B cell (primary cell): ENCODE measurements at regions of chr19 and their contacts with region 1.

Region 1: DNA sequence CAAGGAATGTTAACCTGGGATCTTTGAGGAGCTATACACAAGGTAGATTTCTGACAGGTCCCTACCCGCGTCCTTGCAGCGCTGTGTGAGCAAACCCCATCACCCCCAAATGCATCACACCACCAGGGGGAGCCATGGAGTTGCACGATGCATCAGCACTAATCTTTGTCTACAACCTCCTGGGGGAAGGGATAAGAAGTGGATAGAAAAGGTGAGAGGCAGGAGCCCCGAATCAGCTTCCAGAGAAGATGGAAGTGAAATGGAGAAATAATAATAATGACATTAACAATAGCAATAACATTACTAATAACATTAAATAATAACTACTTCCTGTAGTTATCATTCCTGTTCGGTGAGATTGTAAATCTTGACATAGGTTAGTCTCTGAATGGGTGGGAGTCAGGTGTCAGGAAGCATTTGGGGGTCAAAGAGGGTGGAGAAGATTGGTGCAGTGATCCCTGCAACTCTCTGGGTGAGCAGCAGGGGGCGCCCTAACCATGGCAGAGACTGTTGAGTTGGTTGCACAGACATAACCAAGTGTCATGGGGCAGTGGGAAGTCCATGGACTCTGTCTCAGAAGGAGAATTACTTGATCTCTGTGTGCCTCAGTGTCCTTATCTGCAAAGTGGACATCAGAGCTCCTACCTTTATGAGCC is 16.5 kb downstream of the SIGLEC7 start:
- DNase-seq: peak; percentile 52
- ATAC-seq: no peak
- H3K4me3 ChIP-seq: no peak overlapping the region
- H3K4me3 Mint-ChIP-seq: no peak overlapping the region
- H3K27ac ChIP-seq: no peak overlapping the region
- H3K27ac Mint-ChIP-seq: no peak overlapping the region
- H3K4me1 ChIP-seq: no peaks in the 10 kb centered on the region
- H3K4me1 Mint-ChIP-seq: no peaks in the 10 kb centered on the region
- H3K27me3 ChIP-seq: peaks cover 0 to 27% (median 4%) of the 10 kb centered on the region in 4 experiments
- H3K27me3 Mint-ChIP-seq: peaks cover 39% of the 10 kb centered on the region
- CTCF ChIP-seq: peak; percentile 73

Region 2: GRCh38 chr19:51064534-51065220 is 93.9 kb before region 1 on chr19 and contains the start of gene KLK13:
- CTCF ChIA-PET with region 1: no interaction called
- POLR2A ChIA-PET with region 1: no interaction called
- intact Hi-C with region 1: loop called (anchors 10 kb)
- DNase-seq: no peak
- ATAC-seq: no peak
- H3K4me3 ChIP-seq: no peak within 1 kb of the TSS
- H3K4me3 Mint-ChIP-seq: no peak within 1 kb of the TSS
- H3K27ac ChIP-seq: no peak within 1 kb of the TSS
- H3K27ac Mint-ChIP-seq: no peak within 1 kb of the TSS
- H3K4me1 ChIP-seq: peaks cover 2 to 4% of the 10 kb centered on the region in 2 donors
- H3K4me1 Mint-ChIP-seq: peaks cover 3% of the 10 kb centered on the region
- H3K27me3 ChIP-seq: peaks cover 0 to 46% (median 16%) of the 10 kb centered on the region in 4 experiments
- H3K27me3 Mint-ChIP-seq: peaks cover 55% of the 10 kb centered on the region
- CTCF ChIP-seq: no peak
- total RNA-seq, gene KLK13: not detected in 2 replicates